Activated CD8-positive, alpha-beta T cell treated with anti-CD3 and anti-CD28 coated beads, Interleukin-2, amount 10 ng/mL, durations not matched to agents 7 days and 5 days (primary cell): ENCODE measurements at regions of chr17 and their contacts with region 1.

Region 1: DNA sequence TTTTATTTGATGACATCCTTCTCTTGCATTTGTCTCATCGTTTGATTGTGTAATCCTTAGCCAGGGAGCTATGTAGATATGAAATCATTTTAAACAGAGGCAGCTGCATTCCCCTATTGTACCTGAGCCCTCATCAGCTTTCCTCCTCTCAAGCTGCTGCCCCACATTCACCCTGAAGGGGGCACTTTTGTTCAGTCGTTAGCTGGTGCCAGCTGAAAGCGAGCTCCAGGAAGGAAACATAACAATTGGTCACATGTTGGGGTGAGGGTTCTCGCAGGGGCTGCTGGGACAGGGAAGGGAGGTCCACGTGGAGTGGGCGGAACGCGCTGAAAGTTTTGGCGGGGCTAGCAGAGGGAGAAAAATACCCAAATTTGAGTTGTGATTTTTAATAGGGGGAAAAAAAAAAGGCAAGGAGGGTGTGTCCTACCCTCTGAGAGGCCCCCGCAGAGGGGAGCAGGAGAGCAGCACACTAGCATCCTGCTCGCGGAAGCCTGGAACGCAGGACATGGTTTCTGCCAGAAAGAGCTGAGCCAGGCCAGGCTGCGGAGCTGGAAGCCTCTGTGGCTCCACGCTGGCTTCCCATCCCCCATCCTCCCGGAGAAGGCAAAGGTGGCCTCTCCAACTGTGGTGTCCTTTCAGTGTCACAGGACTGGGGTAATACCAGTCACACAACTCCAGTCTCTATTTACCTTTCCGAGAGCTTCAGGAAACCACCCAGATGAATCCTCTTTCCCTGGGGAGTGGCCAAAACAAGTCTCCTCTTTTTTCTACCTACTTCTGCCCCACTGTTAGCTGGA is 8.5 kb upstream of the MSL1 start:
- DNase-seq: peak; percentile 97
- ATAC-seq: peak; percentile 90
- H3K4me3 Mint-ChIP-seq: peak overlapping the region; percentile 85
- H3K27ac Mint-ChIP-seq: peak overlapping the region; percentile 91
- H3K4me1 Mint-ChIP-seq: peaks cover 65% of the 10 kb centered on the region
- H3K27me3 Mint-ChIP-seq: no peaks in the 10 kb centered on the region

Region 2: GRCh38 chr17:39738931-39739884 is 374.1 kb before region 1 on chr17:
- CTCF ChIA-PET with region 1: no interaction called
- POLR2A ChIA-PET with region 1: no interaction called
- DNase-seq: no peak
- ATAC-seq: no peak
- H3K4me3 Mint-ChIP-seq: peak overlapping the region; percentile 61
- H3K27ac Mint-ChIP-seq: peak overlapping the region; percentile 46
- H3K4me1 Mint-ChIP-seq: peaks cover 31% of the 10 kb centered on the region
- H3K27me3 Mint-ChIP-seq: peaks cover 22% of the 10 kb centered on the region

Region 3: DNA sequence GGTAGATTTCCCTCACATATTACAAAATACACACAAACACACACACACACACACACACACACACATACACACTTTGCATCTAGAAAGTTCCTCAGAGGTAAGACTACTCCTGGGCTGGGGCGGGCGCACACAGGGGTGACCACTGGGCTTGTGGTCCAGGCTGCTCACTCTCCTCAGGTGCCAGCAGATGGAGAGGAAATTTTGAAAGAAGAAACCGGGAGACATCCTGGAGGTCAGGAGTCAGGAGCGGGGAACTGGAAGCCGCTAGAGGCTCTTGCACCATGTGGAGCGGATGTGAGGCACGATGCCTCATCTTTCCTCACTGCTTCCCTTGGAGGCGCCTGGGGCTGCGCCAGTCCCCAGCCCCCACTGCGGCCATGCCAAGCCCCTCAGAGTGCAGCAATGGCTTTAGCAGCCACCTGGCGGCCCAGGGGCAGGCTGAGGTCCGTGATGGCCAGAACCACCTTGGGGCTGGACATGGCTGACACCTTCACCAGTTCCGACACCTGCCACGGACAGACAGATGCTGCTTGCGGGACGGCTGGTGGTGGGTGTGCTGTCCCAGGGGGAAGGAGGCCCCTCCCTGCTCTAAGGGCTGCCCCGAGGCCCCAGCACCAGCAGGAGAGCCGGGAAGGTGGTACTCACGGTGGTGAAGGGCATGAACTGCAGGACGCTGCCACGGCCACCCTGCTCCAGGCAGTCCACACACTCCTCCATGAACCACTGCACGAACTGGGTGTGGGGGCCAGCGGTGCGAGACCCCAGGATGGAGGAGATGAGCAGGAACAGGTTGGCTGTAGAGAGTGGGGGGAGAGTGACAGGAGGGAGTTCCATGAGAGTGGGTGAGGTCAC is 93.9 kb before region 1 on chr17:
- CTCF ChIA-PET with region 1: interaction called, 51 read pairs
- POLR2A ChIA-PET with region 1: no interaction called
- DNase-seq: no peak
- ATAC-seq: no peak
- H3K4me3 Mint-ChIP-seq: no peak overlapping the region
- H3K27ac Mint-ChIP-seq: no peak overlapping the region
- H3K4me1 Mint-ChIP-seq: peaks cover 3% of the 10 kb centered on the region
- H3K27me3 Mint-ChIP-seq: no peaks in the 10 kb centered on the region

Region 4: DNA sequence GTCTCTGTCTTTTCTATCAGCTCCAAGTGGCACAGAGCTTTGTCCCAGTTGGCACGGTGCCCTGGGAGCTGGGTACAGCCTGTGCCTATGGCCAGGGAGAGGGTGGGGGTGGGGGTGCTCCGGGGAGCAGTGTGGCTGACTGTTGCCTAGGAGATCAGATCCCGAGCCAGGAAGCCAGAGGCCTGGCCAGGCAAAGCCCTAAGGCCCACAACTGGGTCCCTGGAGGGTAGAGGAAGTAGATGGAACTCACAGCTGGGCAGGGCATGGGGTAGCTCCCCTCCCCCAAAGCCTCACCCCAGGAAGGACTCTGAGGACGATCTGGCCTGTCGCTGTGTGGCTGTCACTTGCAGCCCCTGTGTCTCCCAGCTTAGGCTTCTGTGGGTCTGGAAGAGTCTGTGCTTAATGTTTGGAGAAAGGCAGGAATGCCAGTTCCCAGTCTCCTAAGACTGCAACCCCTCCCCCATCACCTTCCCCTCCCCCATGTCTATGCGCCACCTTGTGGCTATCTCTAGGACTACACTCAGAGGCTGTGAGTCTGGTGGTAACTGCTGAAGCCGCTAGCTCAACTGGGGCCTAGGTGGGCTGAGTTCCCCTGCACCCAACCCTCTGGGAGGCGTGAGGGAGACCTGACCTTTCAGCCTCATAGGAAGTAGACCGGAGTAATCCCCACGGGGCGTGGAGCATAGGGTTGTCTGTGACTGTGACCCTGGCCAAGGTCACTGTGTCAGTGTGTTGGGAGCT is 37.9 kb before region 1 on chr17:
- CTCF ChIA-PET with region 1: interaction called, 93 read pairs
- POLR2A ChIA-PET with region 1: no interaction called
- DNase-seq: peak; percentile 75
- ATAC-seq: peak; percentile 83
- H3K4me3 Mint-ChIP-seq: no peak overlapping the region
- H3K27ac Mint-ChIP-seq: peak overlapping the region; percentile 71
- H3K4me1 Mint-ChIP-seq: peaks cover 19% of the 10 kb centered on the region
- H3K27me3 Mint-ChIP-seq: no peaks in the 10 kb centered on the region

Region 5: DNA sequence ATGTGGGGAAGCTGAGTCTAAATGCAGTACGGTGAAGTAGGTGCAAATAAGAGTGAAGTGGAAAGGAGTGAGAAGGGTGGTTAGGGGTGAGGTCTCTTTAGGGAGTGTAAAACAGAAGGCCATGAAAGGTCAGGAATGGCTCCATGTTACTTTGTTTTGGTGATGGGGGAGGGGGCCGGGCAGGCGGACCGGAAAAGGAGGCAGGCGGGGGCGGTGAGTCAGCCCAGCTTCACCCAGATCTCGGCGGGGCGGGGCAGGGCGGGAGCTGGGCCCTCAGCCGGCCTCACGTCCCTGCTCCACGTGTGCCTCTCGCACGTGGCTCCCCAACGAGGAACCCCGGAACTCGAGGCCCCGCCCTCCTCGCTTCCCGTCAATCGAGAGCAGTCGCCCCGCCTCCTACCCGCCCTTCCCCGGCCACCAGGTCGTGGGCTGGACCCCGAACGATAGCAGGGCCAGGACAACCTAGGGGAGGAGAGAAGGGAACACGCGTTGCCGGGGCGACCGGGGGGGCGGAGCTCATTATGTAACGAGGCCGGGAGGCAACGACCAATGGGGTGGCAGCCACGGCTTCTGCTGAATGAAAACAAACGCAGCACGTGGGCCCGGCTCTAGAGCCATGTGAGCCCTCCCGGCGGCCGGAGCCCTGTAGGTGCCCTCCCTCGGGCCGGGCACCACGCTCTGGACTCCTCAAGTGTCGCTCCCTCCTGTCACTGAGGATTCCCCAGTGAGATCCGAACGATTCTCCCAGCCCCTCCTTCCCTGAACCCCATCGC is 14.3 kb before region 1 on chr17:
- CTCF ChIA-PET with region 1: interaction called, 156 read pairs
- POLR2A ChIA-PET with region 1: interaction called, 17 read pairs
- DNase-seq: peak; percentile 97
- ATAC-seq: peak; percentile 62
- H3K4me3 Mint-ChIP-seq: peak overlapping the region; percentile 82
- H3K27ac Mint-ChIP-seq: peak overlapping the region; percentile 78
- H3K4me1 Mint-ChIP-seq: peaks cover 91% of the 10 kb centered on the region
- H3K27me3 Mint-ChIP-seq: no peaks in the 10 kb centered on the region

Region 6: DNA sequence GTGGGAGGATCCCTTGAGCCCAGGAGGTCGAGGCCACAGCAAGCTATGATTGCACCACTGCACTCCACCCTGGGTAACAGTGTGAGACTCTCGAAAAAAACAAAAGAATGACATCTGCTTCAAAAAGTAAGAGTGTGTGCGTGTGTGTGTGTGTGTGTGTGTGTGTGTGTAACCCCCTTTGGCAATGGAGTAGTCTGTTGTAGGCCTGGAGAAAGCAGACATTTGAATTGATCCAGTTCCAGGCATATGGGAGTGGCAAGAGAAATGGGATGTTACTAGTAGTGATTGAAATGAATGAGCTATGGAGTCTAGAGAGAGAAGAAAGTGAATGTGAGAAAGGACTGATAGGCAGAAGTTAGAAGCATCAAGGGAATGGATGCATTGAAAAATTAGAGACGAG is 37.0 kb after region 1 on chr17:
- CTCF ChIA-PET with region 1: interaction called, 17 read pairs
- POLR2A ChIA-PET with region 1: no interaction called
- DNase-seq: no peak
- ATAC-seq: no peak
- H3K4me3 Mint-ChIP-seq: no peak overlapping the region
- H3K27ac Mint-ChIP-seq: no peak overlapping the region
- H3K4me1 Mint-ChIP-seq: peaks cover 19% of the 10 kb centered on the region
- H3K27me3 Mint-ChIP-seq: no peaks in the 10 kb centered on the region

Region 7: GRCh38 chr17:40177275-40177874 is 64.1 kb after region 1 on chr17 and contains the start of gene RAPGEFL1:
- CTCF ChIA-PET with region 1: interaction called, 46 read pairs
- POLR2A ChIA-PET with region 1: no interaction called
- DNase-seq: peak; percentile 88
- ATAC-seq: peak; percentile 95
- H3K4me3 Mint-ChIP-seq: peak within 1 kb of the TSS; percentile 18
- H3K27ac Mint-ChIP-seq: peak within 1 kb of the TSS; percentile 28
- H3K4me1 Mint-ChIP-seq: peaks cover 9% of the 10 kb centered on the region
- H3K27me3 Mint-ChIP-seq: no peaks in the 10 kb centered on the region
- total RNA-seq, gene RAPGEFL1: 4.8 to 5.3 TPM

Region 8: DNA sequence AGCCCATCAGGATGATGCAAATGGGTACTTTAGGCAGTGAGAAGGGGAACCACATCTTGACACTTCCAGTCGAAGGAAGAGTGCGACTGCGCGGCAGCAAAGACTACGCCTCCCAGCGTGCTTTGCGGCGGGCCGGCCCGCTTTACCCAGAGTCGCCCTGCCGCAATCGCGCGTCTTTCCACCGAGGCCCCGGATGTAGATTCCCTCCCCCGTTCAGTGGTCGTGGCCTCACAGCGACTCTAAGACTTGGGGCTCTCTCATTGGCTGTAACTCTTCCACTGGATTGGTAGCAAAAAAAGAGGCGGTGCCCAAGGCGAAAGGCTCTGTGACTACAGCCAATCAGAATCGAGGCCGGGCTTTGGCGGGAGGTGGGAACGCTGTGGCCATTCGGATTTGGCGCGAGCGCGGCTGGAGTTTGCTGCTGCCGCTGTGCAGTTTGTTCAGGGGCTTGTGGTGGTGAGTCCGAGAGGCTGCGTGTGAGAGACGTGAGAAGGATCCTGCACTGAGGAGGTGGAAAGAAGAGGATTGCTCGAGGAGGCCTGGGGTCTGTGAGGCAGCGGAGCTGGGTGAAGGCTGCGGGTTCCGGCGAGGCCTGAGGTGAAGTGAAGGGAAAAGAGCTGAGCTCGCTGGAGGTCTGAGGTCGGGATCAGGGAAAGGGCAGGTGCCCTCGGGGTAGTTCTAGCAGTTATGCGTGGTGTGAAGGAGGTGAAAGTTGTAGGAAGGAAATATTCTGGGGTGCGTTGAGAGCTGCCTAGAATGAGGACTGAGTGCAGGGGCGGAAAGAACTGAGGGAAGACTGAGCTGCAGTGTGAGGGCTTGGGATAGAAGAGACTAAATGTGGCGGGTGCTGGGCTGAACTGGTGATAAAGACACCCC is 174.4 kb after region 1 on chr17 and contains the start of gene CDC6:
- CTCF ChIA-PET with region 1: interaction called, 38 read pairs
- POLR2A ChIA-PET with region 1: interaction called, 3 read pairs
- DNase-seq: peak; percentile 100
- ATAC-seq: peak; percentile 96
- H3K4me3 Mint-ChIP-seq: peak within 1 kb of the TSS; percentile 98
- H3K27ac Mint-ChIP-seq: peak within 1 kb of the TSS; percentile 97
- H3K4me1 Mint-ChIP-seq: peaks cover 45% of the 10 kb centered on the region
- H3K27me3 Mint-ChIP-seq: no peaks in the 10 kb centered on the region
- total RNA-seq, gene CDC6: 103 to 110 TPM